Caco-2 (cell line): ENCODE measurements at regions of chr1 and their contacts with region 1.

Region 1: GRCh38 chr1:116570358-116571200 is at the start of gene CD58:
- DNase-seq: peak; percentile 79 to 81
- H3K4me3 ChIP-seq: peak within 1 kb of the TSS; percentile 72
- H3K4me3 Mint-ChIP-seq: peak within 1 kb of the TSS; percentile 72
- H3K27ac Mint-ChIP-seq: peak within 1 kb of the TSS; percentile 66
- H3K4me1 ChIP-seq: peaks cover 11% of the 10 kb centered on the region; the same call in 1 of the 2 replicates
- H3K4me1 Mint-ChIP-seq: peaks cover 7% of the 10 kb centered on the region
- H3K27me3 ChIP-seq: no peaks in the 10 kb centered on the region
- H3K27me3 Mint-ChIP-seq: no peaks in the 10 kb centered on the region
- CTCF ChIP-seq: peak; percentile 52 to 57
- total RNA-seq, gene CD58: 5.6 and 7.6 TPM in 2 replicates

Region 2: DNA sequence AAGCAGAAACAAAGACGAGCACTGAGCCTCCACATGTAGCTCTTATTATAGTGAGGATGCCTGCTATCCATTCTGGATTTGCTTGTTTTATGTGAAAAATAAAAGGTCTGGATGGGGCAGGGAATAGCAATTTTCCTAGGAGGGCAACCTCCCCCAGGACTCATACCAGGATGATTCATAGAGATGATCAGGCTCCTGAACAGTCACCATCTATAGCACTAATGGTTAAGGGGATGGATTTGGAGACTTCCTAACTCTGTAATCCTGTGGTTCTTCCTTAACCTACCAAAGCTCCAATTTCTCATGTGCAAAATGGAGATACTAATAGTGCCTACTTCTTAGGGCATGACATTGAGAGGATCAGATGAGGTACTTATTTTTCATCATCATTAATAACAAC is 34.7 kb after region 1 on chr1:
- CTCF ChIA-PET with region 1: no interaction called
- POLR2A ChIA-PET with region 1: no interaction called
- intact Hi-C with region 1: no loop called
- DNase-seq: no peak
- H3K4me3 ChIP-seq: no peak overlapping the region
- H3K4me3 Mint-ChIP-seq: no peak overlapping the region
- H3K27ac Mint-ChIP-seq: no peak overlapping the region
- H3K4me1 ChIP-seq: no peaks in the 10 kb centered on the region
- H3K4me1 Mint-ChIP-seq: peaks cover 6% of the 10 kb centered on the region
- H3K27me3 ChIP-seq: no peaks in the 10 kb centered on the region
- H3K27me3 Mint-ChIP-seq: no peaks in the 10 kb centered on the region
- CTCF ChIP-seq: no peak

Region 3: GRCh38 chr1:116671912-116672311 is 101.3 kb after region 1 on chr1:
- CTCF ChIA-PET with region 1: interaction called, 19 read pairs
- POLR2A ChIA-PET with region 1: no interaction called
- intact Hi-C with region 1: loop called (anchors 1 kb)
- DNase-seq: no peak
- H3K4me3 ChIP-seq: no peak overlapping the region
- H3K4me3 Mint-ChIP-seq: no peak overlapping the region
- H3K27ac Mint-ChIP-seq: no peak overlapping the region
- H3K4me1 ChIP-seq: no peaks in the 10 kb centered on the region
- H3K4me1 Mint-ChIP-seq: peaks cover 4% of the 10 kb centered on the region
- H3K27me3 ChIP-seq: no peaks in the 10 kb centered on the region
- H3K27me3 Mint-ChIP-seq: no peaks in the 10 kb centered on the region
- CTCF ChIP-seq: no peak

Region 4: GRCh38 chr1:116724765-116725375 is 154.3 kb after region 1 on chr1:
- CTCF ChIA-PET with region 1: no interaction called
- POLR2A ChIA-PET with region 1: no interaction called
- intact Hi-C with region 1: loop called (anchors 5 kb)
- DNase-seq: peak in 1 of 2 experiments; percentile 53
- H3K4me3 ChIP-seq: no peak overlapping the region
- H3K4me3 Mint-ChIP-seq: no peak overlapping the region
- H3K27ac Mint-ChIP-seq: no peak overlapping the region
- H3K4me1 ChIP-seq: no peaks in the 10 kb centered on the region
- H3K4me1 Mint-ChIP-seq: no peaks in the 10 kb centered on the region
- H3K27me3 ChIP-seq: no peaks in the 10 kb centered on the region
- H3K27me3 Mint-ChIP-seq: peaks cover 3% of the 10 kb centered on the region
- CTCF ChIP-seq: peak; percentile 40 to 49

Region 5: GRCh38 chr1:116817582-116818064 is 247.0 kb after region 1 on chr1:
- CTCF ChIA-PET with region 1: interaction called, 3 read pairs
- POLR2A ChIA-PET with region 1: no interaction called
- intact Hi-C with region 1: loop called (anchors 2 kb)
- DNase-seq: peak; percentile 71 to 74
- H3K4me3 ChIP-seq: no peak overlapping the region
- H3K4me3 Mint-ChIP-seq: no peak overlapping the region
- H3K27ac Mint-ChIP-seq: no peak overlapping the region
- H3K4me1 ChIP-seq: no peaks in the 10 kb centered on the region
- H3K4me1 Mint-ChIP-seq: no peaks in the 10 kb centered on the region
- H3K27me3 ChIP-seq: no peaks in the 10 kb centered on the region
- H3K27me3 Mint-ChIP-seq: no peaks in the 10 kb centered on the region
- CTCF ChIP-seq: peak; percentile 53 to 59